Caco-2 (cell line): ENCODE measurements at regions of chr2 and their contacts with region 1.

Region 1: DNA sequence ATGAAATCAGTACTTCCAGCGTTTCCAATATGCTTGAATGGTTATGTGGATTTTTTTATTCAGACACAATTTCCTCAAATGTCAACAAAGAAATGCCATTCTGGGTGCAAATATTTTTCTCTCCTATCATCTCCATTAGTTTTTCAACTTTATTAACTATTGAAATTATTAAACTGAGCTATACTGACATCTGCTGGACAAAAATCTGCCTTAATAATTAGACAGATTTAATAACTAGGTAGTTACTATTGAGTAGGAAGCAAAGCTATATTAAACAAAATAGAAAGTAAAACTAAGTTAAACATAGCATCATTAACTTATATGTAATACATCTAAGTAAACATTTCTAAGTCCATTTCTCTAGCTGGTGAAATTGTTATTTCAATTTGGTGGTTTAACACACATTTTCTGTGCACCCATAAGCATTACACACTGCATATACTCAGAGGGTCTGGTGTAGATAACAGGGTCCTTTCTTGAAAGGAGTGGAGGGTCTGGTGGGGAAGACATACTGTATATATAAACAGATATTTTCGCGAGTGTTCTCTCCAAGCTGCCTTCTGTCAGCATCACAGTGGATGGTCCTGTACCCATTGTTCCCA is 77.0 kb downstream of the LANCL1 start:
- DNase-seq: peak in 1 of 2 experiments; percentile 11
- H3K4me3 ChIP-seq: no peak overlapping the region
- H3K4me3 Mint-ChIP-seq: no peak overlapping the region
- H3K27ac Mint-ChIP-seq: no peak overlapping the region
- H3K4me1 ChIP-seq: no peaks in the 10 kb centered on the region
- H3K4me1 Mint-ChIP-seq: no peaks in the 10 kb centered on the region
- H3K27me3 ChIP-seq: no peaks in the 10 kb centered on the region
- H3K27me3 Mint-ChIP-seq: peaks cover 6% of the 10 kb centered on the region
- CTCF ChIP-seq: peak; percentile 34 to 37

Region 2: GRCh38 chr2:209977386-209978239 is 421.9 kb before region 1 on chr2:
- CTCF ChIA-PET with region 1: no interaction called
- POLR2A ChIA-PET with region 1: no interaction called
- intact Hi-C with region 1: loop called (anchors 2 kb)
- DNase-seq: peak in 1 of 2 experiments; percentile 36
- H3K4me3 ChIP-seq: no peak overlapping the region
- H3K4me3 Mint-ChIP-seq: no peak overlapping the region
- H3K27ac Mint-ChIP-seq: no peak overlapping the region
- H3K4me1 ChIP-seq: no peaks in the 10 kb centered on the region
- H3K4me1 Mint-ChIP-seq: no peaks in the 10 kb centered on the region
- H3K27me3 ChIP-seq: no peaks in the 10 kb centered on the region
- H3K27me3 Mint-ChIP-seq: peaks cover 9% of the 10 kb centered on the region
- CTCF ChIP-seq: peak; percentile 37 to 53

Region 3: DNA sequence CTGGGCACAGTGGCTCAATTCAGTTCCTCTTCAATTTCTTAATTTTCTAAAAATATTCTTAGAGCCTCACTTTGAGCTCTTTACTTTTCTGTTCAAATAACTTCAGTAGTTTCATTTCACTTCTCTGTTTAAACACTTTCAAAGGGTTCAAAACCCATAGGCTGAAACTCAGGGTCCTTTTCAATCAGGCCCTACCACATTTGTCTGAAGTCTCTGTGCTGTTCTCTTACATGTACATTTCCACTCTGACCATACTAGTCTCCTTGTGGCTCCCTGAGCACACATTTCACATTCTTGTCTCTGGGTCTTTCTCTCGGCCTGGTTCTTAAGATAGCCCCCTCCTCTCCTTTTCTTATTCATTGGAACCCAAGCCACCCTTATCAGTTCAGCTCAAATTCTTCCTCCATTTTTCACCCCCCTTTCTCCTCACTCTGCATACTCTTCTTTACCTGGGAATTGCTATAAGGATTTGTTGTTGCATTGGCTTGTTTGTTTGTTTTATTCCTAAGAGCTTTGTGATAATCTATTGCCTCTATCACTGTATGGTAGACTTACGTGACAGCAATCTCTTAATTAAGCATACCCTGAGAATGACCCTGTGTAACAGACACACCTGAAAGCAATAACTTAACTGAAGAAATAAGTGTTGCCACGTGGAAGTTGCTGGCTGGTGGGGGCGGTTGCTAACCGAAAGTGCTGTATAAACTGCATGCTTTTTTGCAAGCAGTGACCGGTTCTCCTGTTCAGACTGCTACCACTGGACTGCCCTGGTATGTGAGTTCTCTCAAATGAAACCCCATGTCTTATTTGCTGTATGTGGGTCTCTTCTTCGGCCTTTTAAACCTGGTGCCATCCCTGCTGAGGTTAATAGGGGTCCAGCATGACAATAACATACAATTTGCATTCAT is 146.6 kb before region 1 on chr2:
- CTCF ChIA-PET with region 1: no interaction called
- POLR2A ChIA-PET with region 1: no interaction called
- intact Hi-C with region 1: loop called (anchors 1 kb)
- DNase-seq: no peak
- H3K4me3 ChIP-seq: no peak overlapping the region
- H3K4me3 Mint-ChIP-seq: no peak overlapping the region
- H3K27ac Mint-ChIP-seq: no peak overlapping the region
- H3K4me1 ChIP-seq: no peaks in the 10 kb centered on the region
- H3K4me1 Mint-ChIP-seq: no peaks in the 10 kb centered on the region
- H3K27me3 ChIP-seq: no peaks in the 10 kb centered on the region; the same call in 1 of the 2 replicates
- H3K27me3 Mint-ChIP-seq: peaks cover 5% of the 10 kb centered on the region
- CTCF ChIP-seq: no peak

Region 4: DNA sequence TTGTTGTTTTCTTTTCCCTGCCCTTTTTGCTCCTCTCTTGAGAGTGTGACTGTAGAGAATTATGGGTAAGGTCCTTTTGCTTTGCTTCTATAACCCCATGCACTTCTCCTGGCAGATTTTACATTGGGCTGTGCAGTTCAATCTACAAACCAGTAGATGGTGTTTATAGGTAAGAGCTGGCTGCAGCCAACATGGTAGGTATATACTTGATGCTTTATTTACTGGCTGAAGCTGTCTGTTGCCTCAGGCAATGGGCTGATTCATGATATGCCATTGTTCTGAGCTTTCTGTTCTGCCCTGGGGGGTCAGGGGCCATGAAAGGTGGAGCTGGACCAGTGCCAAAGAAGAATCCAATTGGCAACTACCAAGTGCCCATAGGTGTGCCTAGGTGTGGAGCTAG is 36.3 kb before region 1 on chr2:
- CTCF ChIA-PET with region 1: no interaction called
- POLR2A ChIA-PET with region 1: no interaction called
- intact Hi-C with region 1: loop called (anchors 1 kb)
- DNase-seq: no peak
- H3K4me3 ChIP-seq: no peak overlapping the region
- H3K4me3 Mint-ChIP-seq: no peak overlapping the region
- H3K27ac Mint-ChIP-seq: no peak overlapping the region
- H3K4me1 ChIP-seq: no peaks in the 10 kb centered on the region
- H3K4me1 Mint-ChIP-seq: no peaks in the 10 kb centered on the region
- H3K27me3 ChIP-seq: no peaks in the 10 kb centered on the region
- H3K27me3 Mint-ChIP-seq: peaks cover 3% of the 10 kb centered on the region
- CTCF ChIP-seq: peak; percentile 32 to 35

Region 5: GRCh38 chr2:211103989-211104388 is 704.4 kb after region 1 on chr2:
- CTCF ChIA-PET with region 1: no interaction called
- POLR2A ChIA-PET with region 1: no interaction called
- intact Hi-C with region 1: no loop called
- DNase-seq: no peak
- H3K4me3 ChIP-seq: no peak overlapping the region
- H3K4me3 Mint-ChIP-seq: no peak overlapping the region
- H3K27ac Mint-ChIP-seq: no peak overlapping the region
- H3K4me1 ChIP-seq: no peaks in the 10 kb centered on the region
- H3K4me1 Mint-ChIP-seq: no peaks in the 10 kb centered on the region
- H3K27me3 ChIP-seq: no peaks in the 10 kb centered on the region
- H3K27me3 Mint-ChIP-seq: peaks cover 7% of the 10 kb centered on the region
- CTCF ChIP-seq: no peak